ENCODE measurements at regions of chr11 and their contacts with region 1.

Region 1: DNA sequence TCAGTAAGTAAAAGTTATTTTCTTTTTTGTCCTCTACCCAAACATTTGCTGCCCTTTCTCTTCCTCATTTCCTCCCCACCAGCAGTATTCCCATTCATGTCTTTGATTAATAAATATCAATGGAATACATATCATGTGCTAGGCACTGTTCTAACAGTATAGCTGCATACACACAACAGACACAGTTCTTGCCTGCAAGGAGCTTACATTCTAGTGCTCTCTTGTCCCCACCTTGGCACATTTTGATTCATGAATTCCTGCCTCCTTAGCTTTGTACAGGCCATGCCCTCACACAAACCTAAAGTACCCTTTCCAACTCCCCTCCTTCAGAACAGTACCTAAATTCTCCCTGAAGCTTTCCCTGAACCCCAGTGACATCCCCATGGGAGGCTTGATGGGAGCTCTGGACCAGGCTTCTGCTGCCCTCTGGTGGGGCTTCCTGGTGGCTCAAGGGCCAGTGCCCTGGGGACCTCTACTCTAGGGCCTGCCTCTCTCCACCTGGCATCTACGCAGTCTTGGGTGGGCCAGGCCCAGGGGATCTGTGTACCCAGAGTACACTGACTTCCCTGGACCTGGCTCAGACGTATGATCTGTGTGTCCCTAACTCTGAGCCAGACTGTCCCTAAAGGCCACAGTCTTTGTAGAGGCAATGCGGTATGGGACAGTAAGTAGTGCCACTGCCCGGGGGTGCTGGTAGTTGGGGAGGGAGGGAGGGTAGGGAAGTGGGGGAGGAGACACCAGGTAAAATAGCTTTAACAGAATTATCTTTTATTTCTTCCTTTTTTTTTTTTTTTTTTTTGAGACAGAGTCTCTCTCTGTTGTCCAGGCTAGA is 14.1 kb downstream of the RPS13 start:
- DNase-seq: peak; percentile 28
- H3K4me3 ChIP-seq: no peak overlapping the region
- H3K27ac ChIP-seq: no peak overlapping the region
- H3K4me1 ChIP-seq: no peaks in the 10 kb centered on the region
- H3K27me3 ChIP-seq: no peaks in the 10 kb centered on the region
- CTCF ChIP-seq: peak; percentile 76 to 89

Region 2: DNA sequence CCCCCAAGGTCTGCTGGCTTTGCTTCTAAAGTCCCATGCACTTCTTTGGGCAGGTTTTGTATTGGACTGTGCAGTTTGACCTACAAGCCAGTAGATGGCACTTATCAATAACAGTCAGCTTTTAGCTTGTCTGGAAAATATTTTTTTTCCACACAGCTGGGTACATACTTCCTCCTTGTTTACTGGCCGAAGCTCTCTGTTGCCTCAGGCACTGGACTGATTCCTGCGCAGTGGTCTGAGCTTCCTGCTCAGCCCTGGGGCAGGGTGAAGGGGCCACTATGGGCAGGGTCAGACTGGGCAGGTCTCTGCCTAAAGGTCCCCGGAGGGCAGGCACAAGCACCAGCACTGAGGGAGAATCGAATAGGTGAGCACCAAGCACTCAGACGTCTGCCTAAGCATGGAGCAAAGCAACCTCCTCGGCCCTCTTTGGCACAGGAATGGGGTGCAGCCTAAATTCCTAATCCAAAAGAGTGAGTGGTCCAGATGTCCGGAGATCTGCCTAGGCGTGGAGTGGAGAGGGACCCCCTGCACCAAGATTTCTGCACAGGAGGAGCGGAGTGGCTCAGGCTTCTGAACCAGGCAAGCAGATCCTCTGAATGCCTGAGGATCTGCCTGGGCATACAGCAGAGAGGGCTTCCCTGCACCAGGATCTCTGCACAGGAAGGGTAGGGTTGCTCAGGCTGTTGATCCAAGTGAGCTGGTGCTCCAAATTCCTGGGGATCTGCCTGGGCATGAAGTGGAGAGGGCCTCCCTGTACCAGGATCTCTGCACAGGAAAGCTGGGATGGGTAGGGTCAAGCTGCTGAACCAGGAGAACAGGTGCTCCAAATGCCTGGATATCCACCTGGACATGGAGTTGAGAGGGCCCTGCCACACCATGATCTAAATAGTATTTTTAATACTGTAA is 430.8 kb before region 1 on chr11:
- CTCF ChIA-PET with region 1: no interaction called
- dilution Hi-C with region 1: no loop called
- in situ Hi-C with region 1: no loop called
- intact Hi-C with region 1: loop called (anchors 5 kb)
- DNase-seq: peak; percentile 43
- H3K4me3 ChIP-seq: no peak overlapping the region
- H3K27ac ChIP-seq: no peak overlapping the region
- H3K4me1 ChIP-seq: peaks cover 9% of the 10 kb centered on the region
- H3K27me3 ChIP-seq: no peaks in the 10 kb centered on the region
- CTCF ChIP-seq: peak; percentile 54 to 58

Region 3: GRCh38 chr11:16809886-16810668 is 253.3 kb before region 1 on chr11:
- CTCF ChIA-PET with region 1: no interaction called
- dilution Hi-C with region 1: no loop called
- in situ Hi-C with region 1: loop called (anchors 10 to 25 kb)
- intact Hi-C with region 1: no loop called
- DNase-seq: peak; percentile 63
- H3K4me3 ChIP-seq: no peak overlapping the region
- H3K27ac ChIP-seq: no peak overlapping the region
- H3K4me1 ChIP-seq: peaks cover 9% of the 10 kb centered on the region
- H3K27me3 ChIP-seq: no peaks in the 10 kb centered on the region
- CTCF ChIP-seq: no peak

Region 4: DNA sequence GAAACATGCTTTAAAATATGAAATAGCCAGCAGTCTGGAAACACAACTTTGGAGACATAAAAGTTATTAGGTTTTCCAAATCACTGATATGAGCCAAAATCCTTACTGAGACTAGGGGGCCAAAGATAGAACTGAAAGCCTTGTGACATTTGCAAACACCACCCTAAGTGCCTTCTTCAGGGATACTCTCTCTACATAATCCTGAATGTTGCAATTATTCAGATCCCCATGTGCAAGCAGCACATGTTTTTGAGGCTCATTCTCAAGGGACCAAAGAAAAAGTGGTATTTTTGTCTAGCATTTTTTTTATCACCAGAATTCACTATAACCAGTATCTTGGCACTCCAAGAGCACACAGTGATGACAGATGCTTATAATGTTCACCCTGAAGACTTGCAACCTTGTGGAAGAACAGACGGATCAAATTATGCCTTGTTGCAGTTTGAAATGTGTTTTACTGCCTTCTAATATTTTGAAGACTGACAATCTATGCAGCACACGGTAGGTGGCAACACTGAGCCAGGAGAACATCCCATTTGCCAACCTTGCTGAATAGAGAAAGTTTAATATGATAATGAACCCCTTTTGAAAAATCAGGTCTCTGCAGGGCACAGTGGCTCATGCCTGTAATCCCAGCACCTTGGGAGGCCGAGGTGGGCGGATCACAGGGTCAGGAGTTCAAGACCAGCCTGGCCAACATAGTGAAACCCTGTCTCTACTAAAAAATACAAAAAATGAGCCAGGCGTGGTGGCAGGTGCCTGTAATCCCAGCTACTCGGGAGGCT is 127.7 kb before region 1 on chr11:
- CTCF ChIA-PET with region 1: no interaction called
- dilution Hi-C with region 1: no loop called
- in situ Hi-C with region 1: no loop called
- intact Hi-C with region 1: loop called (anchors 2 kb)
- DNase-seq: peak; percentile 45
- H3K4me3 ChIP-seq: no peak overlapping the region
- H3K27ac ChIP-seq: no peak overlapping the region
- H3K4me1 ChIP-seq: no peaks in the 10 kb centered on the region
- H3K27me3 ChIP-seq: no peaks in the 10 kb centered on the region
- CTCF ChIP-seq: peak; percentile 80 to 85

Region 5: GRCh38 chr11:16986434-16987215 is 76.8 kb before region 1 on chr11:
- CTCF ChIA-PET with region 1: no interaction called
- dilution Hi-C with region 1: loop called (anchors 5 kb)
- in situ Hi-C with region 1: no loop called
- intact Hi-C with region 1: no loop called
- DNase-seq: no peak
- H3K4me3 ChIP-seq: no peak overlapping the region
- H3K27ac ChIP-seq: no peak overlapping the region
- H3K4me1 ChIP-seq: peaks cover 11% of the 10 kb centered on the region
- H3K27me3 ChIP-seq: no peaks in the 10 kb centered on the region
- CTCF ChIP-seq: no peak

Region 6: GRCh38 chr11:17504330-17505107 is 441.1 kb after region 1 on chr11:
- CTCF ChIA-PET with region 1: no interaction called
- dilution Hi-C with region 1: no loop called
- in situ Hi-C with region 1: no loop called
- intact Hi-C with region 1: loop called (anchors 10 kb)
- DNase-seq: peak; percentile 48
- H3K4me3 ChIP-seq: no peak overlapping the region
- H3K27ac ChIP-seq: no peak overlapping the region
- H3K4me1 ChIP-seq: no peaks in the 10 kb centered on the region
- H3K27me3 ChIP-seq: no peaks in the 10 kb centered on the region
- CTCF ChIP-seq: peak; percentile 93 to 96

Region 7: DNA sequence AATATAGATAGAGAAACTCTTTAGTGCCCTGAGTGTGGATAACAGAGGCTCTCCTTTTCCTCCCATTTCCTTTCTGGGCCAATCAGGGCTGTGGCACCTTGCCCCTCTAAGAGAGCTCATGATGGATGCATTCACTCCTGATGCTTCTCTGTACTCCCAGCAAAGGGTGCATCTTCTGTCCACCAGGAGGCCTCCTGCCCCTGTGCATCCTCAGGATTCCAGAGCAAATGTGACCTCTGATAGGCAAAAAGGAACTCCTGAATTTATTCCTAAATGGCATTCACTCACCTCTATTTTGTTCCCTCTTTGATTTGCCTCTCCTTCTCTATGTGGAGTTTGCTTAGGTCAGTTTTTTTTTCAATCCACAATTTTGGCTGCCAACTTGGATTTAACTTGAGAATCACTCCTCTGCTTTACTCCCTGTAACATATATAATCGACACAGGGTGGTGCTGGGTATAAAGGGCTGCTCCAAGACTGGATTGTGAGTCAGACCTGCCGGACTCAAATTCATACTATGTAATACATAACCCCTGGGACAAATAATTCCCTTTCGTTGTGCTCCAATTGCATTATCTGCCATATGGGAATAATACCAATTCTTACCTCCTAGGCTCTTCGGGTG is 1108.1 kb after region 1 on chr11:
- CTCF ChIA-PET with region 1: no interaction called
- dilution Hi-C with region 1: no loop called
- in situ Hi-C with region 1: no loop called
- intact Hi-C with region 1: no loop called
- DNase-seq: peak; percentile 35
- H3K4me3 ChIP-seq: no peak overlapping the region
- H3K27ac ChIP-seq: no peak overlapping the region
- H3K4me1 ChIP-seq: peaks cover 8% of the 10 kb centered on the region
- H3K27me3 ChIP-seq: no peaks in the 10 kb centered on the region
- CTCF ChIP-seq: peak; percentile 53 to 78

Measured in mammary epithelial cell (primary cell).